ENCODE measurements at regions of chr4 and their contacts with region 1.

Region 1: GRCh38 chr4:71184195-71184781 is 154.5 kb upstream of the SLC4A4 start:
- DNase-seq: no peak
- H3K4me3 ChIP-seq: no peak overlapping the region
- H3K27me3 ChIP-seq: no peaks in the 10 kb centered on the region
- CTCF ChIP-seq: peak; percentile 73

Region 2: GRCh38 chr4:71486550-71487343 is 302.5 kb after region 1 on chr4:
- CTCF ChIA-PET with region 1: no interaction called
- POLR2A ChIA-PET with region 1: no interaction called
- DNase-seq: no peak
- H3K4me3 ChIP-seq: no peak overlapping the region
- H3K27me3 ChIP-seq: no peaks in the 10 kb centered on the region
- CTCF ChIP-seq: no peak

Region 3: DNA sequence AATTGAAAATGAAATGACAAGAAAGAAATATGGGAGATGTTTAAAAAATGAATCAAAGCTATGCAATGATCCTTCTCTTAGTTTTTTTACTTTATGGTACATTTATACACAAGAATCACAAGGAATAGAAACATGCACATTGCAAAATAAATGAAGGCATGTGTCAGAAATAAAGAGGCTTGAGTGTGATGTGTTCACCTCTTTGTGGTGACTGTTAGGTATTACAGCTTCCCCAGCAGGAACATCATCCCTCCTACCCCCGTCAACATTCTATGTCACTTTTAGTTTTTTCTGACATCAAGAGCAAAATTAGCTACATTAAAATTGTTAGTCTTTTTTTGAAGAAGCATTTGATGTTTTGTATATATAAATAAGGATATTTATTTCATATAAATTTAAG is 369.3 kb after region 1 on chr4:
- CTCF ChIA-PET with region 1: interaction called, 10 read pairs
- POLR2A ChIA-PET with region 1: no interaction called
- DNase-seq: no peak
- H3K4me3 ChIP-seq: no peak overlapping the region
- H3K27me3 ChIP-seq: no peaks in the 10 kb centered on the region
- CTCF ChIP-seq: peak; percentile 63

Measured in BJ (cell line).